GM12878 (cell line): ENCODE measurements at regions of chr22 and their contacts with region 1.

Region 1: DNA sequence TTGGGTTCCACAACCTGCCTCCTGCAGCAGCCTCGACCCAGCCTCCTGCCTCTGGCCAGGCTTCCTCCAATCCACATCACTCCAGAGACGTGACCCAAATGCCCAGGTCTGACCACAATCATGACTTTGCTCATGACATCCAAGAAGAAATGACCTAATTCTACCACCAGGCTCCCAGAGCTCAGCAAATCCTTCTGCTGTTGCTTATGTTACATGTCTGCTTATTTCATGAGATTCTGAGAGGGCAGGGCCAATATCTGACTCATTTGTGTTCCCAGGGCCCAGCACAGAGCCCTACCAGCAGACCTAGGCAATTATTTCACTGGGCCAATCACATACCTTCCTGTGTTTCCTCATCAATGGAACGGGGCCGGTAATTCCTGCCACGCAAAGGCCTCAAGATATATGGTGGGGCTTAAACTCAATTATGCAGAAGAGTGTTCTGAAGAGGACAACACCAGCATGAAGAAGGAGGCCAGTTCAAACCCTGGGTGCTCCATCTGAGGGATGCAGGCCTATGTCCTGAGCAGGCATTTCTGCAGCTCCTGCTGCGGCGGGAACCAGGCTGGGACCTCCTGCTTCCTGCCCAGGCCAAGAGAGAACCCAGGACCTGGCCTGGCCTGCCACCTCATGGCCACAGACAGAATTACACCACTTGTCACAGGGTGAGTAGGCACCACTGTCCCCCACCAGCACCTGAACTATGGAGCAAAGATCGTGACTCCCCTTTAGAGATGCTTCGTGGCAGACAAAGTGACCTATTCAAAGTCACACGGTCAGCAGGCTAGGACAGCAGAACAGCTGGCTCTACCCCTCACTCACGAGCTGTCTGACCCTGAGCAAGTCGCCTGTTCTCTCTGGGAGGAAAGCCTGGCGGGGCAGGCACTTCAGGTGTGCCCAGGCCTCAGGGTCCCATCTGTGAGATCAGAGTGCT is 5.9 kb downstream of the CENPM start:
- DNase-seq: no peak
- ATAC-seq: peak; percentile 60
- H3K4me3 ChIP-seq: 0 out of 2 replicates have a peak overlapping the region, but pooled peaks have one; percentile 4
- H3K27ac ChIP-seq: peak overlapping the region; percentile 94
- H3K4me1 ChIP-seq: peaks cover 66% of the 10 kb centered on the region
- H3K27me3 ChIP-seq: no peaks in the 10 kb centered on the region
- CTCF ChIP-seq: peak; percentile 88 to 97 (median 95)
- EP300 ChIP-seq: peak in 1 of 2 experiments; percentile 11; a peak in 1 of 4 replicates
- POLR2A ChIP-seq: peak; percentile 33; the same call in 1 of the 2 replicates
- RAD21 ChIP-seq: peak; percentile 92

Region 2: GRCh38 chr22:41656556-41656955 is 284.5 kb before region 1 on chr22:
- CTCF ChIA-PET with region 1: no interaction called
- POLR2A ChIA-PET with region 1: no interaction called
- RAD21 ChIA-PET with region 1: no interaction called
- SMC1A ChIA-PET with region 1: no interaction called
- in situ Hi-C with region 1: no loop called
- intact Hi-C with region 1: no loop called
- DNase-seq: no peak
- ATAC-seq: no peak
- H3K4me3 ChIP-seq: no peak overlapping the region
- H3K27ac ChIP-seq: no peak overlapping the region
- H3K4me1 ChIP-seq: no peaks in the 10 kb centered on the region
- H3K27me3 ChIP-seq: no peaks in the 10 kb centered on the region
- CTCF ChIP-seq: no peak
- EP300 ChIP-seq: no peak
- POLR2A ChIP-seq: no peak
- RAD21 ChIP-seq: no peak

Region 3: DNA sequence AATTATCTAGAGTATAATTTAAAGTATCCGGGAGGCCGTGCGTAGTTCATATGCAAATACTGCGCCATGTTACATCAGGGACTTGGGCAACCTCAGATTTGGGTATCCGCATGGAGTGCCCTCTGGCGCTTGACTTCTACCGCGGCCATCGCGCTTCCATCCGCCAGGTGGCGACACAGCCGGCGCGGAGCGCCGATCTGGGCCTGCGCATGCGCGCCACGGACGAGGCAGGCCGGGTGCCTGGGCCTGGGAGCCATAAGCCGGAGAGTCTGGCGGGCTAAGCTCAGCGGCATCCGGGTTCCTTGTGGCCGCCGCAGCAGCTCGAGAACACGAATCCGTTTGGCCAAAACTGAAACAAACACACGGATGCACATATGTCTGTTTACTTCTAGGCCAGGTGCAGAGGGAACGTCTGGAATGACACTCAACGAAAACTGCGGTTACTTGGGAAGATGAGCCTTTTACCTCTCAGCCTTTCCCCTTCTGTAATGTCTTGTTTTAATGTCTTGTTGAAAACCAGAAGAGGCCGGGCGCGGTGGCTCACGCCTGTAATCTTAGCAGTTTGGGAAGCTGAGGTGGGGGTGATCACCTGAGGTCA is 274.3 kb before region 1 on chr22:
- CTCF ChIA-PET with region 1: interaction called, 16 read pairs
- POLR2A ChIA-PET with region 1: no interaction called
- RAD21 ChIA-PET with region 1: interaction called, 8 read pairs
- SMC1A ChIA-PET with region 1: interaction called, 7 read pairs
- in situ Hi-C with region 1: no loop called
- intact Hi-C with region 1: loop called (anchors 1 kb)
- DNase-seq: peak; percentile 72
- ATAC-seq: peak; percentile 96
- H3K4me3 ChIP-seq: peak overlapping the region; percentile 14; the same call in 1 of the 2 replicates
- H3K27ac ChIP-seq: peak overlapping the region; percentile 76
- H3K4me1 ChIP-seq: peaks cover 3% of the 10 kb centered on the region; the same call in 1 of the 2 replicates
- H3K27me3 ChIP-seq: no peaks in the 10 kb centered on the region
- CTCF ChIP-seq: peak; percentile 98 to 100 (median 100); a peak in 5 of 6 replicates
- EP300 ChIP-seq: no peak
- POLR2A ChIP-seq: peak; percentile 94
- RAD21 ChIP-seq: peak; percentile 66

Region 4: DNA sequence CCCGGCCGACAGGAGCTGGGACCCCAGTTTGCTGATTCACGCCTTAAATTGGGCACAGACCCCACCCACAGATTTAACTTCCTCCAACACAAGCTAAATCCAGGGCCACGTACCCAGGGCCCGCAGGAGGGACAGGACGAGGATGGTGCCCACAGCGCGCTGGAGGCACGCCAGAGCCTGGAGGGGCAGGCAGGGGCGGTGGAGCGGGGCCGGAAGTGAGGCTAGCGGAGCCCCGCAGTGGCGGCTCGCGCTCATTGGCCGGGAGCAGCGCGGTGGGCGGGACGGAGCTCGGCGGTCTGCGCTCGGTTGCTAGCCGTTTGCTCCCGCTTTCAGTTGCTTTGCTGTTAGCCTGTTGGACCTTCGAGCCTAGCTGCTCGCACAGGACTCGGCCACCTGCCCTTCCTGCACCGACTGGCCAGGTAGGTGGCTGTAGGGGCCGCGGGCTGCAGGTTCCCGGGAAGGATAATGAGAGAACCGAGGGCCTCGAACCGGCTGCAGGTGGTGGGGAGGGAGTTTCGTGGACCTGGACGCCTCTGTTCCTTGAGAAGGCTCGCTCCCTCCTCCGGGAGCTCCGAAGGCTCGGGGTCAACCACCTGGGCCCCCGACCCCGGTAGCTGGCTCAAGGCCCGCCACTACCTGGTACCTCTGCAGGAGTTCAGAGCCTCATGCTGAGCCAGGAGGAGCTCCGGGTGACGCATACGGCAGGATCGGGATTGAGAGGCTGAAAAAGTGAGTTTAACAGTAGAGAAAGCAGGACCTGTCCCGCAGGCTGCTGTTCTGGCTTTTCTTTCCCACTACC is 140.6 kb before region 1 on chr22 and contains the start of gene CCDC134:
- CTCF ChIA-PET with region 1: interaction called, 10 read pairs
- POLR2A ChIA-PET with region 1: interaction called, 12 read pairs
- RAD21 ChIA-PET with region 1: interaction called, 17 read pairs
- SMC1A ChIA-PET with region 1: interaction called, 3 read pairs
- in situ Hi-C with region 1: no loop called
- intact Hi-C with region 1: no loop called
- DNase-seq: peak; percentile 70
- ATAC-seq: peak; percentile 98
- H3K4me3 ChIP-seq: peak within 1 kb of the TSS; percentile 89
- H3K27ac ChIP-seq: peak within 1 kb of the TSS; percentile 82
- H3K4me1 ChIP-seq: peaks cover 19% of the 10 kb centered on the region
- H3K27me3 ChIP-seq: no peaks in the 10 kb centered on the region
- CTCF ChIP-seq: no peak
- EP300 ChIP-seq: no peak
- POLR2A ChIP-seq: peak; percentile 95
- RAD21 ChIP-seq: no peak
- polyA plus RNA-seq, gene CCDC134: 0.35 to 1.2 TPM

Region 5: DNA sequence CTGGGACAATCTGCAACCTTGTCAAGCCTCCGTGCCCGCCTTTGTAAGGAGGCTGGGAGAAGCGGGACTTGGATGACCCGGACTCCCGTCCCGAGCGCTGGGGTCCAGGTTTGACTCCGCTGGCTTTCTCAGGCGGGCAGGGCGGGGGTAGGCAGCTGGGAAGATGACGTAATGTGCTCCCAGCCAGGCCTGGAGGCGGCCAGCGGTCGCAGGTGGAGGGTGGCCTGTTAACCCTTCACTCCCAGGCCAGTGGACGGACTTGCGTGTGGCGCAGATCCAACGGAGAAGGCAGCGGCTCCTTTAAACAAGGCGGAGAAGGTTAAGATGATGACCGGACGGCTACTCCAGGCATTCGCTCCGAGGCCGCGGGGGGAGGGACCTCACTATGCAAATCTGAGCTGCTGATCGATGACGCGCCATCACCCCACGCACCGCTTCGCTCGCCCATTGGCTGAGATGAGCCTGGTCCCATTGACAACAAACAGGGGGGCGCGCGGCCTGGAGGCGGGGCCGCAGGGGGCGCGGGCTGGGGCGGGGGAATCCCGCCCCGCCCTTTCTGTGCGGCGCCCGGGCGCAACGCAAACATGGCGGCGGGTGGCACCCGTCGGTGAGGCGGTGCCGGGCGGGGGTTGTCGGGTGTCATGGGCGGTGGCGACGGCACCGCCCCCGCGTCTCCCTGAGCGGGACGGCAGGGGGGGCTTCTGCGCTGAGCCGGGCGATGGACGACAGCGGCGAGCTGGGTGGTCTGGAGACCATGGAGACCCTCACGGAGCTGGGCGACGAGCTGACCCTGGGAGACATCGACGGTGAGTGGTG is 108.3 kb before region 1 on chr22 and contains the start of gene SREBF2:
- CTCF ChIA-PET with region 1: interaction called, 20 read pairs
- POLR2A ChIA-PET with region 1: interaction called, 66 read pairs
- RAD21 ChIA-PET with region 1: interaction called, 84 read pairs
- SMC1A ChIA-PET with region 1: interaction called, 8 read pairs
- in situ Hi-C with region 1: loop called (anchors 5 kb)
- intact Hi-C with region 1: loop called (anchors 2 kb)
- DNase-seq: peak; percentile 99
- ATAC-seq: peak; percentile 92
- H3K4me3 ChIP-seq: peak within 1 kb of the TSS; percentile 92
- H3K27ac ChIP-seq: peak within 1 kb of the TSS; percentile 95
- H3K4me1 ChIP-seq: peaks cover 12% of the 10 kb centered on the region
- H3K27me3 ChIP-seq: no peaks in the 10 kb centered on the region
- CTCF ChIP-seq: 0 out of 6 replicates have a peak, but pooled peaks of 1 of the 3 experiments have one; percentile 1
- EP300 ChIP-seq: peak; percentile 64 to 75
- POLR2A ChIP-seq: peak; percentile 94
- RAD21 ChIP-seq: no peak
- polyA plus RNA-seq, gene SREBF2: 2.4 to 3.6 TPM

Region 6: DNA sequence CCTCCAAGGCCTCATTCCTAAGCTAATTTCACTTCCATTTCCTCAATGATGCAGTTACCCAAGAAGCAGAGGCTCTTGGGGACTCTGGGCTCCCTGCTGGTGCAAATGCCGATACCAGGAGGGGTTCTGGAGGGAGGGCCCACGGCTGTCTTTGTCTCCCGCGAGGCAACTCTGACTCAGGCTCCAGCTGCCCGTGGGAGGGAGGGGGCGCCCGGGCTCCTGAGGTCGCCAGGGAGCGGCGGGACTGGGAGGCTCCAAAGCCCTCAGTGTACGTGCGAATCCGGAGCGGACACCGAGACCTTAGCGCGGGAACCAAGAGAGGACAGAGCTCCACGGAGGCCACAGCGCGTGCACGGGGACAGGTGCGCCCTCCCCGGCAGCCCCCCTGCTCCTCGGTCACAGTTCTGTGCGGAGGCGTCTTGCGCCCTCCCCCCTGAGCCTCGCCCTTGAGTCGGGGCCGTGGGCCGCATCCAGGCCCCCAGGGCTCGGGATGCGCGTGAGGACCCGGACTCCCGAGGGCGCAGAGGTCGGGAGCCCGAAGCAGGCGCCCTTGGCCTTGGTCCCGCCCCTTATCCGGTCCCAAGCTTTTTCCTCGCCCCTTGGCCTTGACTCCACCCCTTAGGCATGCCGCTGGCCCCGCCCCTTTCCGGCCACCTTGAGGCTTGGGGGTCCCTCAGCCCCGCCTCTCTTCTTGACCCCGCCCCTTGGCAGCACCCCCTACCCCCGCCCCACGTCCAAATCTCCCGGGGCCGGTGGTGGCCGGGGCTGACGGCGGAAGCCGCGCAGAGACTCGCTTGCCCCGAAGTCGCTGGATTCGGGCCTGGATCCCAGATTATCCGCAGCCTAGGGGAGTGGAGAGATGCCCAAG is 21.5 kb before region 1 on chr22:
- CTCF ChIA-PET with region 1: interaction called, 234 read pairs
- POLR2A ChIA-PET with region 1: interaction called, 599 read pairs
- RAD21 ChIA-PET with region 1: interaction called, 408 read pairs
- SMC1A ChIA-PET with region 1: interaction called, 321 read pairs
- in situ Hi-C with region 1: no loop called
- intact Hi-C with region 1: loop called (anchors 1 kb)
- DNase-seq: peak; percentile 71
- ATAC-seq: peak; percentile 61
- H3K4me3 ChIP-seq: peak overlapping the region; percentile 66
- H3K27ac ChIP-seq: peak overlapping the region; percentile 86
- H3K4me1 ChIP-seq: peaks cover 72% of the 10 kb centered on the region
- H3K27me3 ChIP-seq: peaks cover 0 to 3% of the 10 kb centered on the region in 2 experiments; a peak in 2 of 4 replicates
- CTCF ChIP-seq: no peak
- EP300 ChIP-seq: no peak
- POLR2A ChIP-seq: peak; percentile 85
- RAD21 ChIP-seq: no peak

Region 7: DNA sequence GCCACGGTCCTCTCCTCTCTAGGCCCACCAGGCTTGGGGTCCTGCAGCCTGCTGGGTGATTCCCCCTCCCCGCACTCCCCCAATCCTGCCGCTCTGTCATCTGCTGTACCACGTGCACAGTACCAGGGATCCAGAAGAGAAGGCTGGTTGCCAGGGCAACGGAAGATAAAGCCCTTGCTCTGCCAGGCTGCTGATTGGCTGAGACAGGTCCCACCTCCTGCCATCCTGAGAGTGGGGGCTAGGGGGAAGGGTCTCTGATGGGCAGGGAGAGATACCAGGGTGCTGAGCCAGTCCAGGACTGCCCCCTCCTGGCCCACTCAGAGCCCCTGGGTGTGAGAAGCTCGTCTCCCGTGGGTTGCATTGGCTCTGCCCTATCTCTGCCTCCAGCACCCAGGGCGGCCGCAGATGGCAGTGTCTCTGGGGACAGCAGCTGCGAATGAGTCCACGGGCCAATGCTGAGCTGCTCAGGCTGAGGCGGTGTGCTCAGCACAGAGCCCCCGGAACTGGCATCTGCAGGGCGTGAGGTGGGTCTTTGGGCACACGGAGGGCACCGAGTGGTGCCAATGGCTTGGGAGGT is 10.9 kb after region 1 on chr22 and contains the start of gene SMIM45:
- CTCF ChIA-PET with region 1: interaction called, 27 read pairs
- POLR2A ChIA-PET with region 1: interaction called, 145 read pairs
- RAD21 ChIA-PET with region 1: interaction called, 115 read pairs
- SMC1A ChIA-PET with region 1: interaction called, 19 read pairs
- in situ Hi-C with region 1: no loop called
- intact Hi-C with region 1: no loop called
- DNase-seq: no peak
- ATAC-seq: peak; percentile 35
- H3K4me3 ChIP-seq: no peak within 1 kb of the TSS
- H3K27ac ChIP-seq: no peak within 1 kb of the TSS
- H3K4me1 ChIP-seq: peaks cover 41% of the 10 kb centered on the region
- H3K27me3 ChIP-seq: no peaks in the 10 kb centered on the region
- CTCF ChIP-seq: peak in 1 of 3 experiments; percentile 19; a peak in 2 of 6 replicates
- EP300 ChIP-seq: no peak
- POLR2A ChIP-seq: no peak
- RAD21 ChIP-seq: no peak

Region 8: DNA sequence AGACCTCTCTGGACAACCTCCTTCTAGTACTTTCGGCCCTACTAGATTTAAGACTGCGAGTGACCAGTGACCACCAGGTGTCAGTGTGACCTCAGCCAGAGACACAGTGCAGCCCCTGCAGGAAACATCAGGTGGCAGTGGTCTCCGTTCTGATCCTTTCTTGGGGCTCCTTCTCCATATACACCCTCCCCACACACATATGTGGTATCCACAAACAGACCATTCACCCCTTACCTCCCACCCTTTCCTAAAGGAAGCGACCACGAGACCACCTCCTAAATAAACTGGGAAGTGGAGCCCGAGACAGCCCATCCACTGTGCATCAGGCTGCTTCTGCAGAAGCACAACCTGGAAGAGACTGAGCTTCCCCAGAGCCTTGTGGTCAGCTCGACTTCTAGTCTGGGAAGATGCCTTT is 228.0 kb after region 1 on chr22:
- CTCF ChIA-PET with region 1: no interaction called
- POLR2A ChIA-PET with region 1: no interaction called
- RAD21 ChIA-PET with region 1: no interaction called
- SMC1A ChIA-PET with region 1: no interaction called
- in situ Hi-C with region 1: no loop called
- intact Hi-C with region 1: no loop called
- DNase-seq: peak; percentile 51
- ATAC-seq: peak; percentile 97
- H3K4me3 ChIP-seq: no peak overlapping the region
- H3K27ac ChIP-seq: no peak overlapping the region
- H3K4me1 ChIP-seq: peaks cover 10% of the 10 kb centered on the region
- H3K27me3 ChIP-seq: no peaks in the 10 kb centered on the region
- CTCF ChIP-seq: peak; percentile 93 to 100 (median 96); a peak in 5 of 6 replicates
- EP300 ChIP-seq: no peak
- POLR2A ChIP-seq: no peak
- RAD21 ChIP-seq: peak; percentile 100